ENCODE measurements at regions of chr1 and their contacts with region 1.

Region 1: GRCh38 chr1:27603681-27604578 is at the start of gene AHDC1:
- DNase-seq: peak; percentile 61
- H3K4me3 ChIP-seq: peak within 1 kb of the TSS; percentile 88
- H3K27ac ChIP-seq: peak within 1 kb of the TSS; percentile 21
- H3K27me3 ChIP-seq: no peaks in the 10 kb centered on the region
- CTCF ChIP-seq: no peak
- polyA plus RNA-seq, gene AHDC1: 2.8 and 3.0 TPM in 2 replicates

Region 2: GRCh38 chr1:27392096-27392777 is 211.7 kb before region 1 on chr1 and contains the start of gene GPR3:
- CTCF ChIA-PET with region 1: interaction called, 20 read pairs
- POLR2A ChIA-PET with region 1: no interaction called
- DNase-seq: peak; percentile 78
- H3K4me3 ChIP-seq: peak within 1 kb of the TSS; percentile 77
- H3K27ac ChIP-seq: peak within 1 kb of the TSS; percentile 21
- H3K27me3 ChIP-seq: no peaks in the 10 kb centered on the region
- CTCF ChIP-seq: peak; percentile 61
- polyA plus RNA-seq, gene GPR3: 1.3 and 1.7 TPM in 2 replicates

Region 3: DNA sequence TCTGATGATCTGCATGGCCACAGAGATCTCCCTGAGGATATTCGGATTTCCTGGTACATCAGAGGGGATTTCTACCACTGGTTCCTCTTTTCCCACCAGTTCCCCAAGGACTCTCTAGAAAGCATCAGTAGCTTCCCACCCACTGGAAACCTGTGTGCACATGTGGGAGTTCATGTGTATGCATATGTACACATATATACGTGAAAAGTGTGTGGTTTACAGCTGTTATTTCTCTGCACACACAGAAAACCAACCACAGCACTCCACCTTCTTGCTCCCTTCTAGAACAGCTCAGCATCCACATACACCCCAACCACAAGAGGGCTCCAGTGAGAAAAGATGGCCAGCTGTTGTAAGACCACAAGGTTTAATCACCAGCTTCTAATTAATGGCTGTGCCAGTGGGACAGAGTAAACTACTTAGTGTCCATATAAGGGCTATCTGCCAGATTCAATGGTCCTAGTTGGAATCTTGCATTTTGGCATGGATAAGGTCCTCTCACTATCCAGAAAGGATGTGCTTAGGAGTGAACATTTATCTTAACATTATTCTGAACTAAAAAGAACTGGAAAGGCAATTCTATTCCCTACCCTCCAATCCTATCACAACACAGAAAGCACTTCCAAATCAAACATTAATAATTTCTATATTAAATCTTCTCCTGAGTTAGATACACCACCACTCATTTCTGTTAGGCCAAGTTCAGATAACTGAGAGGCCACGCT is 187.4 kb before region 1 on chr1:
- CTCF ChIA-PET with region 1: interaction called, 54 read pairs
- POLR2A ChIA-PET with region 1: interaction called, 3 read pairs
- DNase-seq: no peak
- H3K4me3 ChIP-seq: no peak overlapping the region
- H3K27ac ChIP-seq: no peak overlapping the region
- H3K27me3 ChIP-seq: no peaks in the 10 kb centered on the region
- CTCF ChIP-seq: peak; percentile 76

Region 4: DNA sequence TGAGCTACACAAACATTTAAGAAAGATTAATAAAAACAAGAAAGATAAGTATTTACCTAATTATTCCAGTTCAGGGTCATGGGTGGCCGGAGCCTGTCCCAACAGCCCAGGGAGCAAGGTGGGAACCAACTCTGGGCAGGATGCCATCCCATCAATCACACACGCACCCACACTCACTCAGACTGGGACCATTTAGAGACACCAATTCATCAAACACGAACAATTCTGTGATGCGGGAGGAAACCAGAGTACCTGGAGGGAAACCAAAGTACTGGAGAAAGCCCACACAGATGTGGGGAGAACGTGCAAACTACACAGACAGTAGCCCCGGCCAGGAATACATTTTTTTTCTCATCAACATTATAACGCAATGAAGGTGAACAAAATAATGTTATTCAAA is 130.2 kb before region 1 on chr1:
- CTCF ChIA-PET with region 1: no interaction called
- POLR2A ChIA-PET with region 1: no interaction called
- DNase-seq: no peak
- H3K4me3 ChIP-seq: no peak overlapping the region
- H3K27ac ChIP-seq: no peak overlapping the region
- H3K27me3 ChIP-seq: no peaks in the 10 kb centered on the region
- CTCF ChIP-seq: no peak

Region 5: GRCh38 chr1:27574871-27575831 is 28.8 kb before region 1 on chr1:
- CTCF ChIA-PET with region 1: interaction called, 10 read pairs
- POLR2A ChIA-PET with region 1: interaction called, 8 read pairs
- DNase-seq: peak; percentile 54
- H3K4me3 ChIP-seq: peak overlapping the region; percentile 44; the same call in 1 of the 2 replicates
- H3K27ac ChIP-seq: peak overlapping the region; percentile 77
- H3K27me3 ChIP-seq: no peaks in the 10 kb centered on the region
- CTCF ChIP-seq: peak; percentile 44

Region 6: GRCh38 chr1:27682351-27682944 is 78.5 kb after region 1 on chr1:
- CTCF ChIA-PET with region 1: no interaction called
- POLR2A ChIA-PET with region 1: no interaction called
- DNase-seq: no peak
- H3K4me3 ChIP-seq: no peak overlapping the region
- H3K27ac ChIP-seq: no peak overlapping the region
- H3K27me3 ChIP-seq: peaks cover 25% of the 10 kb centered on the region
- CTCF ChIP-seq: no peak

Region 7: DNA sequence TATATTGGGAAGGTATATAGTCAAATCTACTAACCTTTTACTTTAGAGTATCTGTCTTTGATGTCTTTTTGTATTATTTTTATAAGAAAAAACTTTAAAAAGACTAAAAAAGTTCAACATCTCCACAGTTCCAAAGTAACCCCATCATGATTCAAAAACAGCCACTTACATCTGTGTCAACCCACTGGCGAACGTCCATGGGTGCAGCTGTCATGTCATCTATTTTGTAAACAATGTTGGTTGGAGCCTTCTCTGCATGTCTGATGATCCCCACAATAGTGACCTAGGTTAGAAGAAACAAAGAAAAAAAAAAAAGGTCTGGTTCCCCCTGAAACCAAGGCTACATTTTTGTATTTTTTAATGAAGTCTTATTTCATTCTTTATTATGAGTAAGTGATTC is 302.8 kb after region 1 on chr1:
- CTCF ChIA-PET with region 1: no interaction called
- POLR2A ChIA-PET with region 1: no interaction called
- DNase-seq: no peak
- H3K4me3 ChIP-seq: no peak overlapping the region
- H3K27ac ChIP-seq: no peak overlapping the region
- H3K27me3 ChIP-seq: no peaks in the 10 kb centered on the region
- CTCF ChIP-seq: no peak

Measured in AG04450 (cell line).